ENCODE measurements at regions of chr12 and their contacts with region 1.

Region 1: GRCh38 chr12:110468212-110469048 is at the starts of genes FAM216A and GPN3:
- DNase-seq: peak; percentile 97
- H3K4me3 ChIP-seq: peak within 1 kb of the TSS; percentile 49 to 97 (median 74)
- H3K27ac ChIP-seq: peak within 1 kb of the TSS; percentile 91 to 98 (median 96)
- H3K4me1 ChIP-seq: peaks cover 8 to 34% (median 24%) of the 10 kb centered on the region in 4 donors
- H3K27me3 ChIP-seq: no peaks in the 10 kb centered on the region
- CTCF ChIP-seq: no peak
- EP300 ChIP-seq: no peak
- POLR2A ChIP-seq: peak; percentile 43
- total RNA-seq, gene FAM216A: 1.2 to 6.7 (median 1.6) TPM in 3 of 4 donors, not detected in the other
- total RNA-seq, gene GPN3: 6.1 to 9.2 (median 8.8) TPM in 3 of 4 donors, not detected in the other

Region 2: GRCh38 chr12:110280779-110281548 is 187.5 kb before region 1 on chr12 and contains the start of gene ATP2A2:
- in situ Hi-C with region 1: no loop called
- intact Hi-C with region 1: no loop called
- DNase-seq: peak; percentile 92
- H3K4me3 ChIP-seq: peak within 1 kb of the TSS; percentile 91 to 99 (median 96)
- H3K27ac ChIP-seq: peak within 1 kb of the TSS; percentile 96 to 100 (median 100)
- H3K4me1 ChIP-seq: peaks cover 10 to 45% (median 35%) of the 10 kb centered on the region in 4 donors
- H3K27me3 ChIP-seq: no peaks in the 10 kb centered on the region
- CTCF ChIP-seq: no peak
- EP300 ChIP-seq: no peak
- POLR2A ChIP-seq: peak; percentile 75
- total RNA-seq, gene ATP2A2: 128 to 185 (median 178) TPM

Region 3: DNA sequence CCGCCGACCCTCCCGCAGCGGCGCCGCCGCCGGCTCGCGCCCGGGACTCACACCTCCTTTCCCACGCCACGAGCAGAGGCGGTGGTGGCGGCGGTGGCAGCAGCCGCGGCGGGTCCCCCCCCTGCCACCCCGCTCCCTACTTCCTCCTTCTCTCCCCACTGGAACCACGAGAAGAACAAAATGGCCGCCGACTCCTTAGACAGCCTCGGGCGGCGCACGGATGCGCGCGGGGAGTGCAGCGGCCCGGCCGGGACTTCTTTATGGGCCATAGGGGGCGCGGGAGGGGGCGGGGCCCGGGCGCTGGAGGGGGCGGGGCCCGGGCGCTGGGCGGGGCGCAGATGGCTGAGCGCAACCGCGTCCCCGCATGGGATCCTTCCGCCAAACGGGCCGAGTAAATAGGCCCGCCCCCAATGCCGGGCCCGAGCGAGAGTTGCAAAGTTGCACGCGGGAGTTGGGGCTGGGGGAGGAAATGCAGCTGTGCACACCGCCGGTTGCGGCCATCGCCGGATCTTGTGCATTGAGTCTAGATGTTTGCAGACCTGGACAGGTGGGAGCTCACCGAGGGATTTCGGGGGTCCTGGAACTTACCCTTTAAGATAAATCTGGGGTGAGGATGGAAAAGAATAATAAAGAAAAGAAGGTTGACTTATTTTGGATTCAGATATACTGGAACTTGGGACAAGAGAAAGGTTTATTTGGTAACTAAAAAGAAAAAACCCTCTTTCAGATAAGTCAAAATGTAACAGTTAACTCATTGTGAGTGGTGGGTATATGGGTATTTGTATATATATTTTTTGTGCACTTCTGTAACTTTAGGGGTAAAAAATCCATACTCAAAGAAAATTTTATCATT is 274.5 kb after region 1 on chr12 and contains the start of gene PPP1CC:
- in situ Hi-C with region 1: loop called in 1 of 4 experiments (anchors 25 kb)
- intact Hi-C with region 1: loop called (anchors 2 kb)
- DNase-seq: peak; percentile 94
- H3K4me3 ChIP-seq: peak within 1 kb of the TSS; percentile 74 to 94 (median 79)
- H3K27ac ChIP-seq: peak within 1 kb of the TSS; percentile 91 to 97 (median 94)
- H3K4me1 ChIP-seq: peaks cover 9 to 61% (median 50%) of the 10 kb centered on the region in 4 donors
- H3K27me3 ChIP-seq: no peaks in the 10 kb centered on the region
- CTCF ChIP-seq: peak in 1 of 5 experiments; percentile 8
- EP300 ChIP-seq: no peak
- POLR2A ChIP-seq: peak; percentile 92
- total RNA-seq, gene PPP1CC: 156 to 759 (median 244) TPM

Measured in transverse colon (tissue), 4 donors.